GM12878 (cell line): ENCODE measurements at regions of chr7 and their contacts with region 1.

Region 1: DNA sequence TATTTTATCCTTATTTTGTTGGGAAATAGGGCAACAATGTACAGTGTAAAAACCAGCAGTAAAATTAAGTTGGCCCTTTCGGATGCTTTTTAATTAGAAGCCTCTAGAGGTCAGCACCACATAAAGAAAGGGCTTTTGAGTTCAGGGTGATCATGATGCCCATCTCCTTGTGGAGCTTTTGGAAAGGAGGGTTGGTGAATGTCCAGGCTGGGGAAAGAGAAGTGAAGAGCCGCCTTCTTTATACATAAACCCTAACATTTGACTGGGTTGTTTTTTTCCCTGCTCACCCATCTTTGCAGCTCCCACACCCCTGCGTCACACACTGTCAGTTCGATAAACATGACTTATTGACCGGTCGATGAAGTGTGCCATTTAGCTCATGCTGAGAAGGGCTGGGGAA is 29.8 kb downstream of the MTURN start:
- DNase-seq: no peak
- ATAC-seq: peak; percentile 65
- H3K4me3 ChIP-seq: no peak overlapping the region
- H3K27ac ChIP-seq: no peak overlapping the region
- H3K4me1 ChIP-seq: peaks cover 27% of the 10 kb centered on the region
- H3K27me3 ChIP-seq: no peaks in the 10 kb centered on the region
- CTCF ChIP-seq: peak; percentile 47 to 81 (median 71)
- EP300 ChIP-seq: no peak
- POLR2A ChIP-seq: no peak
- RAD21 ChIP-seq: peak; percentile 97

Region 2: DNA sequence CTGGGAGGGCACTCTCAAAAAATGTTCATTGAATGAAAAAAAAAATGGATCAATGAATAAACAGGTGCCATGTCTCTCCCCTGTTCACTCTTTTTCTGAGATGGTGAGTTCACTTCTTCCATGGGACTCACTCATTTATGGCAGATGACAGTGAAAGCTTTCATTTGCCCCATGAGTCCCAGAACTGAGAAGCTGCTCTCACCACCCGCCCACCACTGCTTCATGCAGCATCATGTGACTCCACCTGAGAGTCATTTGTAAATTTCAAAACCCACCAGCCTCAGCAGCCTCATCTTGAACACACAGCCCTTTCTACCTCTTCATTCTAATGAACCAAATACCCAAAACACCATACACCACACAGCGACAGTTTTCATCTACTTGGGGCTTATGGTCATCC is 239.9 kb before region 1 on chr7:
- CTCF ChIA-PET with region 1: no interaction called
- POLR2A ChIA-PET with region 1: no interaction called
- RAD21 ChIA-PET with region 1: no interaction called
- SMC1A ChIA-PET with region 1: no interaction called
- in situ Hi-C with region 1: no loop called
- intact Hi-C with region 1: no loop called
- DNase-seq: no peak
- ATAC-seq: no peak
- H3K4me3 ChIP-seq: no peak overlapping the region
- H3K27ac ChIP-seq: no peak overlapping the region
- H3K4me1 ChIP-seq: no peaks in the 10 kb centered on the region
- H3K27me3 ChIP-seq: no peaks in the 10 kb centered on the region
- CTCF ChIP-seq: no peak
- EP300 ChIP-seq: no peak
- POLR2A ChIP-seq: no peak
- RAD21 ChIP-seq: no peak

Region 3: DNA sequence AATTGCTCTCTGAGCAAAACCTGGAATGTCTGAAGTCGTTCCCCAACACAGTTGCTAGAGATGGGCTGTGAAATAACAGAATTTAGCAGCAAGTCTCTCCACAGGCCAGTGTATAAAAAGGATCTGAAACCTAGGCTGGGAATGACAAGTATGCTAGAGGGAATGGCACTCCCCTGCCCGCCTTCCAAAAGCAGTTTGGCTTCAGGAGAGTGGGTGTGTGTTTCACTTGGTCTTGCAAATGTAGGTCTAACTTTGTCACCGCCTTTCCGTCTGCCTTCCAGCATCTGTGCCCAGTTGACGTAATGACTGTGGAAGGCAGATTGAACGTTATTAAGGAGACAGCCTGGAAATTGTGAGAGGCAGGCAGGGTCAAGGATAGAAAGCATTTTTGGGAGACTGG is 47.8 kb before region 1 on chr7:
- CTCF ChIA-PET with region 1: no interaction called
- POLR2A ChIA-PET with region 1: no interaction called
- RAD21 ChIA-PET with region 1: no interaction called
- SMC1A ChIA-PET with region 1: no interaction called
- in situ Hi-C with region 1: no loop called
- intact Hi-C with region 1: no loop called
- DNase-seq: no peak
- ATAC-seq: no peak
- H3K4me3 ChIP-seq: no peak overlapping the region
- H3K27ac ChIP-seq: no peak overlapping the region
- H3K4me1 ChIP-seq: no peaks in the 10 kb centered on the region
- H3K27me3 ChIP-seq: no peaks in the 10 kb centered on the region
- CTCF ChIP-seq: no peak
- EP300 ChIP-seq: no peak
- POLR2A ChIP-seq: no peak
- RAD21 ChIP-seq: no peak

Region 4: DNA sequence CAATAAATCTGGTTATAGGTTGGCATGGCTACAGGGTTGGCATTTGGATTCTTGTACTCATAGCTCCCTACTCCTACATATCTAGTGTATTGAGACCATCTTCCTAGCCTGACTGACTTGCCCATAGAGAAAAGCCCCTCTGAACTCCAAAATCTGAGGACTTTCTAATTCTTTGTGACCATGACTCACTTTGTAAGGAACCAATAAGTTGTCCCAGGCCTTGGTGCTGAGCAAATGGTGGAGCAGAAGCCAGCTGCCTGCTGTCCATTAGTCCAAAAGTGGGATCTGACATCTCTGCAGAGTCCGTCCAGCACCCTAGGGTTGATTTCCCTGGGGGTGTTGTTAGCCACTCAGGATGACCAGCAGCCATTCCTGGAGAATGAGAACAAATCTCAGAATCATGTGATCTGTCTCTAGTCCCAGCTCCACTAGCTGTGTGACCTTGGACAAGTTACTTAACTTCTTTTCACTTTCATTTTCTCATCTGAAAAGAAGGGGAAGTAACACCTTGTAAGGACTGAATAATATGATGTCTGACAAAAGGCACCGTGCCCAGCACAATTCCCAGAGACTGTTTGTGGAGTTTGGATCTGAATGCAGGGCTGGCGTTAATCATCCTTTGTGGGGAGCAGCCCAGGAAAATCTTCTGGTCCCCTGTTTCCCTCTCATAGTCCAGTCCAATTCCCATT is 14.3 kb after region 1 on chr7:
- CTCF ChIA-PET with region 1: interaction called, 78 read pairs
- POLR2A ChIA-PET with region 1: interaction called, 6 read pairs
- RAD21 ChIA-PET with region 1: interaction called, 75 read pairs
- SMC1A ChIA-PET with region 1: interaction called, 58 read pairs
- in situ Hi-C with region 1: no loop called
- intact Hi-C with region 1: no loop called
- DNase-seq: peak; percentile 61
- ATAC-seq: peak; percentile 90
- H3K4me3 ChIP-seq: peak overlapping the region; percentile 45
- H3K27ac ChIP-seq: peak overlapping the region; percentile 87
- H3K4me1 ChIP-seq: peaks cover 25% of the 10 kb centered on the region
- H3K27me3 ChIP-seq: no peaks in the 10 kb centered on the region
- CTCF ChIP-seq: no peak
- EP300 ChIP-seq: no peak
- POLR2A ChIP-seq: no peak
- RAD21 ChIP-seq: no peak

Region 5: DNA sequence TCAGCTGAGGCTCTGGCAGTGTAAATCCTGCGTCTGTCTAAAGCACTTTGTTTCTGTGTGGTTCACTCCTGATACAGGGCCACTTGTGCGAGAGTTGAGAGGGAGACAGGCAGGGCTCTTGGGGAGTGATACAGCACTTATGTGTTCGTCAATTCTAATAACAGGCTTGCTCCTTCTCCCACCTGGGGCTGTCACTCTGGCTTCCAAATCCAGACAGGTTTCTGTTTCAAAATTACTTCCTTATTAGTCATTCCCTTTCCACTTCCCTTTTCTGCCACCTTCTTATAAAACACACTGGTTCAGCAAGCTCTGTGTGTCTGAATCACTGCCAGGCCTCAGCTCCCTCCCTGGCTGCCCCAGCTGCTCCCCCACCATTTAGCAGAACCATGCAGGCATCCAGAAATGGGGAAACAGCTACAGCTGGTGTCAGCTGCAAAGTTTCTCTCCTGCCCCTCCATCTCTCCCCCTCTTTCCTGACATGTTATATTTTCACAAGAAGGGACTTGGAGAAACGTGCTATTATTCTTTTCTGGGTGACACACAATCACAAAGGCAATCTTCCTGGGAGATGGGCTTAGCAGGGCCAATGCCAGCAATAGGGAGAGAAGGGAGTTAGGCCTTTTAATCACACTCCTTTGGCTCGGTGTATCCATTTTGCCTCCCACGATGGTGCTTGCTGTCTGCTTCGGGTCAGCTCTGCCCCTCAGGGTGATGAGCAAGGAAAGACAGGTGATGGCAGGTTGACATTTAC is 61.5 kb after region 1 on chr7:
- CTCF ChIA-PET with region 1: interaction called, 6 read pairs
- POLR2A ChIA-PET with region 1: no interaction called
- RAD21 ChIA-PET with region 1: interaction called, 10 read pairs
- SMC1A ChIA-PET with region 1: interaction called, 6 read pairs
- in situ Hi-C with region 1: no loop called
- intact Hi-C with region 1: loop called (anchors 5 kb)
- DNase-seq: peak; percentile 79
- ATAC-seq: peak; percentile 91
- H3K4me3 ChIP-seq: no peak overlapping the region
- H3K27ac ChIP-seq: peak overlapping the region; percentile 29; the same call in 1 of the 2 replicates
- H3K4me1 ChIP-seq: peaks cover 25% of the 10 kb centered on the region
- H3K27me3 ChIP-seq: no peaks in the 10 kb centered on the region
- CTCF ChIP-seq: no peak
- EP300 ChIP-seq: peak; percentile 83 to 91
- POLR2A ChIP-seq: no peak
- RAD21 ChIP-seq: no peak

Region 6: GRCh38 chr7:30284298-30285066 is 119.9 kb after region 1 on chr7 and contains the start of gene ZNRF2:
- CTCF ChIA-PET with region 1: interaction called, 182 read pairs
- POLR2A ChIA-PET with region 1: no interaction called
- RAD21 ChIA-PET with region 1: interaction called, 10 read pairs
- SMC1A ChIA-PET with region 1: interaction called, 148 read pairs
- in situ Hi-C with region 1: loop called (anchors 5 kb)
- intact Hi-C with region 1: loop called (anchors 2 kb)
- DNase-seq: peak; percentile 97
- ATAC-seq: peak; percentile 91
- H3K4me3 ChIP-seq: peak within 1 kb of the TSS; percentile 61; the same call in 1 of the 2 replicates
- H3K27ac ChIP-seq: peak within 1 kb of the TSS; percentile 83
- H3K4me1 ChIP-seq: peaks cover 12% of the 10 kb centered on the region
- H3K27me3 ChIP-seq: no peaks in the 10 kb centered on the region
- CTCF ChIP-seq: peak; percentile 21 to 63 (median 39); a peak in 4 of 6 replicates
- EP300 ChIP-seq: no peak
- POLR2A ChIP-seq: peak; percentile 84
- RAD21 ChIP-seq: peak; percentile 33; the same call in 1 of the 2 replicates
- polyA plus RNA-seq, gene ZNRF2: 3.1 to 4.0 TPM

Region 7: GRCh38 chr7:30412810-30413504 is 248.4 kb after region 1 on chr7:
- CTCF ChIA-PET with region 1: interaction called, 17 read pairs
- POLR2A ChIA-PET with region 1: no interaction called
- RAD21 ChIA-PET with region 1: interaction called, 6 read pairs
- SMC1A ChIA-PET with region 1: interaction called, 22 read pairs
- in situ Hi-C with region 1: loop called (anchors 5 kb)
- intact Hi-C with region 1: loop called (anchors 1 kb)
- DNase-seq: peak; percentile 16
- ATAC-seq: peak; percentile 75
- H3K4me3 ChIP-seq: no peak overlapping the region
- H3K27ac ChIP-seq: no peak overlapping the region
- H3K4me1 ChIP-seq: peaks cover 8% of the 10 kb centered on the region
- H3K27me3 ChIP-seq: no peaks in the 10 kb centered on the region
- CTCF ChIP-seq: peak; percentile 38 to 59 (median 40); a peak in 5 of 6 replicates
- EP300 ChIP-seq: no peak
- POLR2A ChIP-seq: no peak
- RAD21 ChIP-seq: peak; percentile 70

Region 8: GRCh38 chr7:30564243-30564892 is 399.8 kb after region 1 on chr7:
- CTCF ChIA-PET with region 1: interaction called, 17 read pairs
- POLR2A ChIA-PET with region 1: no interaction called
- RAD21 ChIA-PET with region 1: interaction called, 28 read pairs
- SMC1A ChIA-PET with region 1: interaction called, 31 read pairs
- in situ Hi-C with region 1: loop called (anchors 5 kb)
- intact Hi-C with region 1: loop called (anchors 1 kb)
- DNase-seq: peak; percentile 30
- ATAC-seq: peak; percentile 100
- H3K4me3 ChIP-seq: no peak overlapping the region
- H3K27ac ChIP-seq: no peak overlapping the region
- H3K4me1 ChIP-seq: no peaks in the 10 kb centered on the region
- H3K27me3 ChIP-seq: no peaks in the 10 kb centered on the region
- CTCF ChIP-seq: peak; percentile 77 to 92 (median 79)
- EP300 ChIP-seq: no peak
- POLR2A ChIP-seq: no peak
- RAD21 ChIP-seq: peak; percentile 92